Panc1 (cell line): ENCODE measurements at regions of chr7 and their contacts with region 1.

Region 1: DNA sequence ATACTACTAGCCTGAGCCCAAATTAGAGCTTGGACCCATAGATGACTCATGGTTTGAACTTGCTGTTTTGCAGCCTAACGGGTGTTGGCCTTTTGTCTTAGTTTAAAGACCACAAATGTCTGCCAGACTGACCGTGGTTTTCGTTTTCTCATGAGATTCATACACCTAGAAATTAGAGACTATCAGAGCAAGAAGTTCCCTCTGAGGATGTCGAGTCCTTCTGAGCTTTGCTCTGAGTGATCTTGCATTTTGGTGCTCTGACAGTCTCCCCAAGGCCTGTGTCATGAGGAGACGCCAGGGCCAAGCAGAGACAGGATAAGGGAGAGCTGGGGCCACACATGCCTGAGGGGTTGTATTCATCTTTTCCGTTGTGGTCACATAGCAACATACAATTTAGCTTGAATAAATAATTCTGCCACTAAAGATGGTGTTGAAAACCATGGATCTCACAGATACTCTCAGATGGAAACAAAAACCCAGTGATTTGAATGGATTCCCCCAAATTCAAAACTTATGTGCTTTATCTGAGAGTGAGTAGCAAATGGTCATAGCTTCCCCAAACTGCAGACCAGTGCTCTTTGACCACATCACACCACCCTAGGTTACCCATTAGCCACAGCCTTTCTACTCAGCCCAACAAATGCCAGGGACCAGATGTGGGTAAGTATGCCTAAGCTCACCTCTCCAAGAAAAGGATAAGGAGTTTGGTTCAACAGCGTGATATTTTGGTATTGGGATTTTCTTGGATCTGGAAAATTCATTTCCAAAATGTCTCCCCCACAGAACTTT is 762.0 kb upstream of the IGFBP3 start:
- DNase-seq: no peak
- ATAC-seq: no peak
- H3K4me3 ChIP-seq: no peak overlapping the region
- H3K27ac ChIP-seq: no peak overlapping the region
- H3K4me1 ChIP-seq: no peaks in the 10 kb centered on the region
- H3K27me3 ChIP-seq: no peaks in the 10 kb centered on the region
- CTCF ChIP-seq: no peak

Region 2: GRCh38 chr7:46664453-46664852 is 18.6 kb before region 1 on chr7:
- CTCF ChIA-PET with region 1: no interaction called
- POLR2A ChIA-PET with region 1: no interaction called
- in situ Hi-C with region 1: no loop called
- intact Hi-C with region 1: no loop called
- DNase-seq: no peak
- ATAC-seq: no peak
- H3K4me3 ChIP-seq: no peak overlapping the region
- H3K27ac ChIP-seq: no peak overlapping the region
- H3K4me1 ChIP-seq: no peaks in the 10 kb centered on the region
- H3K27me3 ChIP-seq: no peaks in the 10 kb centered on the region
- CTCF ChIP-seq: no peak

Region 3: DNA sequence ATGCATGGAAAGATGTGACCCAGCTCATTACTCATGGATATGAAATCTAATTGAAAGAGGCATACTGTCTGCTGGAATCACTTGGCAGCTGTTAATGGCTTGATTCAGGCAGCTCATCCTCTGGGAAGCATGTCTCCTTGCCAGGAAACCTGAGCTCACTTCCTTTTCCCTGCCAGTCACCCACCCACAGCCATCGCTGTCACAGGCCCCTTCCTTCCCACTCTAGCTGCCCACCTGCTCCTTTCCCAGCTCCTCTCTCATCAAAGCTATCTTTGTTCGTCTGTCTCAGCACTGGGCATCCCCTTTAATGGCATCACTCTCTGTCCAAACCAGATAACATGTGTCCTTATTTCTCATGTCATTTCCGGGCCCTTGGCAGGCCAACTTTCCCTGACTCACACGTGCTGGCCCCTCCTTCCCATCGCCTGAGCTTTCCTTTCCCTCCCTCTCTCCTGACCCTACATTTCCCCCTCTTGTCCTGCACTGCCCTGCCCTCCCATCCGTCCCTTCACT is 177.0 kb after region 1 on chr7:
- CTCF ChIA-PET with region 1: interaction called, 12 read pairs
- POLR2A ChIA-PET with region 1: no interaction called
- in situ Hi-C with region 1: no loop called
- intact Hi-C with region 1: no loop called
- DNase-seq: no peak
- ATAC-seq: no peak
- H3K4me3 ChIP-seq: no peak overlapping the region
- H3K27ac ChIP-seq: no peak overlapping the region
- H3K4me1 ChIP-seq: no peaks in the 10 kb centered on the region
- H3K27me3 ChIP-seq: no peaks in the 10 kb centered on the region
- CTCF ChIP-seq: no peak